H1 (cell line): ENCODE measurements at regions of chr12 and their contacts with region 1.

Region 1: DNA sequence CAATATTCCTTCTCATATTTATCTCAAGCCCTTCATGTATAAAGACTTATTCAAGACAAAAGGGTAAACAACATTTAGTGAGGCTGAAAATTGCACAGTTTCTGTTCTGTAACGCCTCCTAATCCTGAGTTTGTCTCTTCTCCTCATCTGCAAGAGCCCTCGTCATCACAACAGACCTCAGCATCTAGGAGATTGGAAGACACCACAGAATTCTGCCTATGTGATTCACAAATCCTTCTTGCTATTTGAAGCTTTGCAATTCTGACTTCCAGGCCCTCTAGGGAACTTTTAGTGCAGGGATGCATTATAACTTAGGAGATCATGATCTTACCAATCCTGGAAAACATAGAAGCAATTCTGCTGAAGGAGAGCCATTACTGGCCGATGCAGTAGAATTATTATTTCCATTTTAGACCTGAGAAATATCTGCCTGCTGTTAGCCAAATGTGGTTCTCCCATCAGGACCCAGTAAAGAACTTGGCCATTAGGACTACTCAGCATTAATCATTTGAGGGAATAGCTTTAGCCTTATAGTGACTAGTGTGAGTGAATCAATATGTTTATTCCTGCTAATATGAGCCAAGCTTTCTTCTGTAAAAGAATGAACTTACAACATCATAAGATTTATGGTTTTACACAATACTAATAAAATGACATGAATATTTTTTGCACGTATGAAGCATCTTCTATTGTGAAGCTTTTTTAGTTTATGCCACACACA is 119.5 kb downstream of the ANO4 start:
- DNase-seq: no peak
- H3K4me3 ChIP-seq: no peak overlapping the region
- H3K27ac ChIP-seq: no peak overlapping the region
- H3K4me1 ChIP-seq: no peaks in the 10 kb centered on the region
- H3K27me3 ChIP-seq: no peaks in the 10 kb centered on the region
- CTCF ChIP-seq: no peak
- EP300 ChIP-seq: no peak
- POLR2A ChIP-seq: no peak
- RAD21 ChIP-seq: no peak

Region 2: GRCh38 chr12:100926669-100927248 is 12.7 kb after region 1 on chr12:
- CTCF ChIA-PET with region 1: interaction called, 16 read pairs
- POLR2A ChIA-PET with region 1: interaction called, 3 read pairs
- DNase-seq: peak; percentile 54 to 63
- H3K4me3 ChIP-seq: no peak overlapping the region
- H3K27ac ChIP-seq: no peak overlapping the region
- H3K4me1 ChIP-seq: peaks cover 0 to 3% (median 3%) of the 10 kb centered on the region in 4 experiments; a peak in 3 of 7 replicates
- H3K27me3 ChIP-seq: no peaks in the 10 kb centered on the region; a peak in 1 of 7 replicates
- CTCF ChIP-seq: peak; percentile 45 to 85 (median 59)
- EP300 ChIP-seq: no peak
- POLR2A ChIP-seq: no peak
- RAD21 ChIP-seq: peak; percentile 79 to 80

Region 3: GRCh38 chr12:101336437-101336836 is 422.4 kb after region 1 on chr12:
- CTCF ChIA-PET with region 1: no interaction called
- POLR2A ChIA-PET with region 1: no interaction called
- DNase-seq: no peak
- H3K4me3 ChIP-seq: no peak overlapping the region
- H3K27ac ChIP-seq: no peak overlapping the region
- H3K4me1 ChIP-seq: no peaks in the 10 kb centered on the region
- H3K27me3 ChIP-seq: no peaks in the 10 kb centered on the region
- CTCF ChIP-seq: no peak
- EP300 ChIP-seq: no peak
- POLR2A ChIP-seq: no peak
- RAD21 ChIP-seq: no peak